Thyroid gland (tissue), 4 donors: ENCODE measurements at regions of chr11 and their contacts with region 1.

Region 1: GRCh38 chr11:58675334-58676155 is 53.1 kb downstream of the CNTF start:
- DNase-seq: peak; percentile 79 to 85
- H3K4me3 ChIP-seq: no peak overlapping the region
- H3K27ac ChIP-seq: no peak overlapping the region
- H3K4me1 ChIP-seq: no peaks in the 10 kb centered on the region
- H3K27me3 ChIP-seq: no peaks in the 10 kb centered on the region
- CTCF ChIP-seq: peak; percentile 75 to 97 (median 78)
- POLR2A ChIP-seq: no peak

Region 2: DNA sequence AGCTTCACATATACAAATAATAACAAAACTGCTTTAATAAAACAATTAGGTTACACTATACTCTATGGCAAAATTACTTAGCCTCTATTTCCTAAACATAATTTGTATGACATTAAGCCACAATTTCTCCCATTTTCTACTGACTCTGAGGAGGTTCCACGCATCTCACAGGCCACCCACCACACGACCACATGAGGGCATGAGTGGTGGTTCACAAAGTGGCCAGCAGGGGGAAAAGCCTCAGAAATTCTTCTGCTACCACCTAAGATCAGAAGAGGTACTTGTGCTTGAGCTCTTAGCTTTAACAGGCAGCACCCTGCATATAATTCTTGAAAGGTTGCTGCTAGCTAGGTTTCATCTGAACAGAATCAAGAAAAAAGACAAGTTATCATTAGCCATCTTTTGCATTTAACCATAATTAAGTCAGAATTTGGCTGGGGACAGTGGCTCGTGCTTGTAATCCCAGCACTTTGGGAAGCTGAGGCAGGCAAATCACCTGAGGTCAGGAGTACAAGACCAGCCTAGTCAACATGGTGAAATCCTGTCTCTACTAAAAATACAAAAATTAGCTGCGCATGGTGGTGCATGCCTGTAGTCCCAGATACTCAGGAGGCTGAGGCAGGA is 107.5 kb before region 1 on chr11:
- intact Hi-C with region 1: loop called (anchors 10 kb)
- DNase-seq: peak; percentile 51 to 53
- H3K4me3 ChIP-seq: no peak overlapping the region
- H3K27ac ChIP-seq: no peak overlapping the region
- H3K4me1 ChIP-seq: peaks cover 0 to 3% of the 10 kb centered on the region in 2 donors
- H3K27me3 ChIP-seq: no peaks in the 10 kb centered on the region
- CTCF ChIP-seq: peak; percentile 46 to 78 (median 58)
- POLR2A ChIP-seq: no peak